ENCODE measurements at regions of chr17 and their contacts with region 1.

Region 1: DNA sequence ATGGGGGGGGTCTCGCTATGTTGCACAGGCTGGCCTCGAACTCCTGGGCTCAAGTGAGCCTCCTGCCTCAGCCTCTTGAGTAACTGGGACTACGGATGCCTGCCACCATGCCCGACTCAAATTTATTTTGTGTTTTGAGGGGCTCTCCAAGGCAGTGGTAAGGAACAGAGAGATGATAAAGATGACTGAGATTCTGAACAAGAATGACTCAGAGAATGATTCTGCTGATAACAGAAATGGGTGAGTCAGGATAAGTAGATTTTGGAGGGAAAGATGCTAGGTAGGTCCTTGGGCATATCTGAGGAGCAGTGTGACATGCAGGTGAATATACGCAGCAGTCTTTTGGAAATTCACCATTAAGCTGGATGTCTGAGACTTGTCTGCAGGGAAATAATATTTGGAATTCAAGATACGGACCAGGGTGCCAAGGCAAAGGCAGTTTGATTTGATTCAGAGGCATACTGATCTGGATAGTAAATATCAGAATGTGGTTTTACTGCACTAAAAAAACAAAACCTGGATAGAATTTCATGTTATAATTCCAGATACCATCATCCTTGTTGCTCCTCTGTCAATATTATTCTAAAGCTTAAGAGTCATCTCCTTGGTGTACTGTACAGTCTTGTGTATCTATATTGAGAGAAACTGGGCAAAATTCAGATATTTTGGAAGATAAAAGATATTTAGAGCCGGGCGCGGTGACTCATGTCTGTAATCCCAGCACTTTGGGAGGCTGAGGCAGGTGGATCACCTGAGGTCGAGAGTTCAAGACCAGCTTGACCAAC is 2.4 kb downstream of the TMEM220 start:
- DNase-seq: peak in 1 of 2 donors; percentile 40
- H3K4me3 ChIP-seq: no peak overlapping the region
- H3K27ac ChIP-seq: no peak overlapping the region
- H3K4me1 ChIP-seq: peaks cover 11% of the 10 kb centered on the region
- H3K27me3 ChIP-seq: no peaks in the 10 kb centered on the region
- CTCF ChIP-seq: no peak
- POLR2A ChIP-seq: no peak

Region 2: DNA sequence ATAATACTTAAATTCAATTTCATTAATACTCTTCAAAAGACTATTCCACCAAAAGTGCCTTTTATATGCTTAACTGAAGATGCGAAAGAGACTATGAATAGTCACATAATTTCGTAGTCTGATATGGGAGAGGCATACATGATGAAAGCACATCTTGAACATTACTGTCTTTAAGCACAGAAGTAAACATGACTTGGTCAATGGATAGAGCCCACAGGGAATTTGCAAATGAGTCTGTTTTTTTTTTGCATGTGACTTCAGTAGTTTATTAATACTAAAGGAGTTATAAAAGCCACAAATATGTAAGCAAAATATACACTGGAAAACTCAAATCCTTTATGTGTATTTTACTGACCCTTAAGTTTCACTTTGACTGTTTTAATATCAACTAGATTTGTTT is 14.1 kb before region 1 on chr17:
- intact Hi-C with region 1: loop called (anchors 1 kb)
- DNase-seq: no peak
- H3K4me3 ChIP-seq: no peak overlapping the region
- H3K27ac ChIP-seq: no peak overlapping the region
- H3K4me1 ChIP-seq: no peaks in the 10 kb centered on the region
- H3K27me3 ChIP-seq: no peaks in the 10 kb centered on the region
- CTCF ChIP-seq: no peak
- POLR2A ChIP-seq: no peak

Measured in vagina (tissue), 2 donors.